ENCODE measurements at regions of chr11 and their contacts with region 1.

Region 1: DNA sequence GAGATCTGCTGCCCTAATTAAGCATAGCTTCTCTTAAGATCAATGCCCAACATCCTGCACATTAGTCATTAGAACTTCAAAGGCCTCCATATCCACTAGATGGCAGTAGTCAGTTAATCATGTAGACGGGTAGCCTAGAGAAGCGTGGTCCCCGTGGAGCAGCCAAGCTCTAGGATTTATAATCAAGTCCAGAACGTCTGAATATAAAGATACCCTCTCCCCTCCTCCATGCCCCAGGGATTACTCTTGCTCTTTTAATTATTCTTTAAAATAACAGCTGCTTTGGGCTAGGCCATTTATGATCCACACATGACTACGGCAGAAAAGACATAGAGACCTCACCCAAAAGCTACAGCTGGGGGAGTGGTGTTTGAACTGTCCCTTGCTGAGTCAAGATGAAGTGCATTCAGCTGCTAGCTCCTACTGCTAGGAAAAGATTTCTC is 327.6 kb upstream of the PLET1 start:
- DNase-seq: peak; percentile 61 to 85 (median 73)
- ATAC-seq: peak; percentile 86 to 89
- H3K4me3 ChIP-seq: no peak overlapping the region
- H3K27ac ChIP-seq: no peak overlapping the region
- H3K4me1 ChIP-seq: no peaks in the 10 kb centered on the region
- H3K27me3 ChIP-seq: no peaks in the 10 kb centered on the region

Region 2: GRCh38 chr11:112485280-112485679 is 103.0 kb before region 1 on chr11:
- intact Hi-C with region 1: no loop called
- DNase-seq: no peak
- ATAC-seq: no peak
- H3K4me3 ChIP-seq: no peak overlapping the region
- H3K27ac ChIP-seq: no peak overlapping the region
- H3K4me1 ChIP-seq: no peaks in the 10 kb centered on the region
- H3K27me3 ChIP-seq: no peaks in the 10 kb centered on the region

Region 3: GRCh38 chr11:112644410-112645131 is 56.3 kb after region 1 on chr11:
- intact Hi-C with region 1: no loop called
- DNase-seq: no peak
- ATAC-seq: no peak
- H3K4me3 ChIP-seq: no peak overlapping the region
- H3K27ac ChIP-seq: no peak overlapping the region
- H3K4me1 ChIP-seq: no peaks in the 10 kb centered on the region
- H3K27me3 ChIP-seq: no peaks in the 10 kb centered on the region

Region 4: GRCh38 chr11:112777283-112777751 is 189.0 kb after region 1 on chr11:
- intact Hi-C with region 1: loop called in 1 of 4 experiments (anchors 10 kb)
- DNase-seq: peak; percentile 39 to 80 (median 78)
- ATAC-seq: peak; percentile 66 to 71
- H3K4me3 ChIP-seq: no peak overlapping the region
- H3K27ac ChIP-seq: peak overlapping the region; percentile 95
- H3K4me1 ChIP-seq: peaks cover 10% of the 10 kb centered on the region
- H3K27me3 ChIP-seq: no peaks in the 10 kb centered on the region

Region 5: GRCh38 chr11:113113801-113114706 is 525.8 kb after region 1 on chr11:
- intact Hi-C with region 1: loop called in 2 of 4 experiments (anchors 5 kb)
- DNase-seq: peak; percentile 56 to 82 (median 81)
- ATAC-seq: peak; percentile 90 to 96
- H3K4me3 ChIP-seq: no peak overlapping the region
- H3K27ac ChIP-seq: peak overlapping the region; percentile 50
- H3K4me1 ChIP-seq: peaks cover 4% of the 10 kb centered on the region
- H3K27me3 ChIP-seq: no peaks in the 10 kb centered on the region

Region 6: DNA sequence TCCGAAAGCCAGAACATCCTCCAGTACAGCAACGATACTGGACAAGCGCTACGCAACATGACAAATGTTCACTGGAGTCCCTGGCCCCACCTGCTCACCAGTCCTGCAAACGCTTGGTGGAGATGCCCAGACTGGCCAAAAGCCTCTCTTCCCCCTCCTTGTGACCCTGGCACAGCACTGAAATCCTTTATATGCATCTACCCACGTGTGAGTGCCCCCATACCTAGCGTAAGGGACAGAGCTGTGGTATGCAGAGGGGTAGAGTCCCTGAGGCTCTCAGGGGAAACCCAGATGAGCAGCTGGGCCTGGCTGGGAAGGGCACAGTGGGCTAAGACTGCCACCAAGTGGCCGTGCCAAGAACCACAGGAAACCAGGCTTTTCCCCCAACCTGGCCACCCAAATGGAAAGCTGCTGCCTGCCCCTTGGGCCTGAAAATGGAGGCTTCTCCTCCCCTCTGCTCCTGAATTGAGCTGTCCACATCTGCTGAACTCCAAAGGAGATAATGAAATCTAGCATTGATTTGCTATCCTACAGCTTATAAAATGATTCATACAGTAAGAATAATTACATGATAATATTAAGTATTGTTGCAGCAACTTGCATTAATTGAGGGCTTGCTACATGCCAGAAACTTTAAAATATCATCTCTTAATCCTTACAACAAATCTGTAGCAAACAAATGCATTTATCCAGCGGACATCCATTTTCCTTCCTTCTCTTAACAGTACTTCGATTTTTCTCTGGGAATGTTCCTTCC is 701.3 kb after region 1 on chr11:
- intact Hi-C with region 1: loop called (anchors 5 kb)
- DNase-seq: peak; percentile 48 to 83 (median 75)
- ATAC-seq: peak; percentile 76 to 82
- H3K4me3 ChIP-seq: no peak overlapping the region
- H3K27ac ChIP-seq: no peak overlapping the region
- H3K4me1 ChIP-seq: no peaks in the 10 kb centered on the region
- H3K27me3 ChIP-seq: no peaks in the 10 kb centered on the region

Measured in right cardiac atrium (tissue), 5 donors.